Calu3 (cell line): ENCODE measurements at regions of chr7 and their contacts with region 1.

Region 1: DNA sequence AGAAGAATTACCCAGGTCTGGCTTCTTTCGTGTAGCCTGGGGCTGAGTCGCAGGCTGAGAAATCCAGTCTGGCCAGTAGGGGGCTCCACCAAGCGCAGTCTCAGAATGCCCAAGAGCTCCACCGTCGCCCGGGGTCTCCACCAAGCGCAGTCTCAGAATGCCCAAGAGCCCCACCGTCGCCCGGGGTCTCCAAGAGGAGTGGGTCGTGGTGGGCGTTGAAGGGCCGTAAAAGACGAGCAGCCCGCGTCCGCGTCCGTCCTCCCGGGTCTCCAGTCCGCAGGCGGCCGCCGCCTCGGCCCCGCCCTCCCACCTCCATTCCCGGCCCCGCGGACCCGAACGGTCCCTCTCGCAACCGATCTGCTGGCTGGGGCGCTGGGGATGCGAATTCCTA is 895 bp upstream of the ZYX start:
- DNase-seq: peak; percentile 87
- H3K4me3 Mint-ChIP-seq: peak overlapping the region; percentile 85
- H3K27ac Mint-ChIP-seq: peak overlapping the region; percentile 98
- H3K4me1 Mint-ChIP-seq: peaks cover 25% of the 10 kb centered on the region
- H3K27me3 Mint-ChIP-seq: no peaks in the 10 kb centered on the region
- CTCF ChIP-seq: peak; percentile 88

Region 2: DNA sequence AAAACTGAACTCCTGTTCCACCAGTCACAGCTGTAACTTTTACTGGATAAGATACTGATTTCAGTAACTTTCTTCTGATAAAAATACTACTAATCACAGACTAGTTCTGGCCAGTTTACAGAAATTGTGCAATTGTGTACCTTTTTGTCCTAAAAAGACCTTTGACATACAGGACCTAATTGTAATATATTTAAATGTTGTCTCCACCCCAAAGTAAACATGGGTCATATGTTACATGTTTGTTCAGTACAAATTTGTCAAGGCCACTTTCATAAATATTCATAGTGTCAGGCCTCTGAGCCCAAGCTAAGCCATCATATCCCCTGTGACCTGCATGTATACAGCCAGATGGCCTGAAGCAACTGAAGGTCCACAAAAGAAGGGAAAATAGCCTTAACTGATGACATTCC is 275.4 kb before region 1 on chr7:
- CTCF ChIA-PET with region 1: no interaction called
- intact Hi-C with region 1: no loop called
- DNase-seq: no peak
- H3K4me3 Mint-ChIP-seq: no peak overlapping the region
- H3K27ac Mint-ChIP-seq: no peak overlapping the region
- H3K4me1 Mint-ChIP-seq: no peaks in the 10 kb centered on the region
- H3K27me3 Mint-ChIP-seq: no peaks in the 10 kb centered on the region
- CTCF ChIP-seq: no peak

Region 3: DNA sequence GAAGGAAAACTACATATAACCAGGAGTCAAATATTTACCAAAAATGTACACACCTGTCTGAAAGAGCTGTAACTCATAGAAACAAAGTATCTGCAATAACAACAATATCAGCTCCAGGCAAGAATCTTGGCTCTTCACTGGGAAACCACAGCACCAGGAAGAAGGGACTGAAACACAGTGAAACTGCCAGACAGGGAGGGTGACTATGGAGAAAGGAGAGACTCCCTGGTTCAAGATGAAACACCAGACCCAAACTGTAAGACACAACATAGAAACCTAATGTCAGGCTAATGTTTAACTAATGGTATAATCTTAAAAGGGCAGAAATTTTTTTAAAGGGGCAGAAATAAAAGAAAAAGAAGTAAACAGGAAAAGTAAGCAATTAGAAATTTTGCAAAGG is 208.6 kb before region 1 on chr7:
- CTCF ChIA-PET with region 1: no interaction called
- intact Hi-C with region 1: no loop called
- DNase-seq: peak; percentile 60
- H3K4me3 Mint-ChIP-seq: peak overlapping the region; percentile 47
- H3K27ac Mint-ChIP-seq: peak overlapping the region; percentile 45
- H3K4me1 Mint-ChIP-seq: peaks cover 23% of the 10 kb centered on the region
- H3K27me3 Mint-ChIP-seq: no peaks in the 10 kb centered on the region
- CTCF ChIP-seq: no peak

Region 4: GRCh38 chr7:143331179-143331820 is 49.0 kb before region 1 on chr7:
- CTCF ChIA-PET with region 1: interaction called, 6 read pairs
- intact Hi-C with region 1: loop called (anchors 2 kb)
- DNase-seq: peak; percentile 59
- H3K4me3 Mint-ChIP-seq: no peak overlapping the region
- H3K27ac Mint-ChIP-seq: peak overlapping the region; percentile 6
- H3K4me1 Mint-ChIP-seq: peaks cover 45% of the 10 kb centered on the region
- H3K27me3 Mint-ChIP-seq: no peaks in the 10 kb centered on the region
- CTCF ChIP-seq: no peak

Region 5: DNA sequence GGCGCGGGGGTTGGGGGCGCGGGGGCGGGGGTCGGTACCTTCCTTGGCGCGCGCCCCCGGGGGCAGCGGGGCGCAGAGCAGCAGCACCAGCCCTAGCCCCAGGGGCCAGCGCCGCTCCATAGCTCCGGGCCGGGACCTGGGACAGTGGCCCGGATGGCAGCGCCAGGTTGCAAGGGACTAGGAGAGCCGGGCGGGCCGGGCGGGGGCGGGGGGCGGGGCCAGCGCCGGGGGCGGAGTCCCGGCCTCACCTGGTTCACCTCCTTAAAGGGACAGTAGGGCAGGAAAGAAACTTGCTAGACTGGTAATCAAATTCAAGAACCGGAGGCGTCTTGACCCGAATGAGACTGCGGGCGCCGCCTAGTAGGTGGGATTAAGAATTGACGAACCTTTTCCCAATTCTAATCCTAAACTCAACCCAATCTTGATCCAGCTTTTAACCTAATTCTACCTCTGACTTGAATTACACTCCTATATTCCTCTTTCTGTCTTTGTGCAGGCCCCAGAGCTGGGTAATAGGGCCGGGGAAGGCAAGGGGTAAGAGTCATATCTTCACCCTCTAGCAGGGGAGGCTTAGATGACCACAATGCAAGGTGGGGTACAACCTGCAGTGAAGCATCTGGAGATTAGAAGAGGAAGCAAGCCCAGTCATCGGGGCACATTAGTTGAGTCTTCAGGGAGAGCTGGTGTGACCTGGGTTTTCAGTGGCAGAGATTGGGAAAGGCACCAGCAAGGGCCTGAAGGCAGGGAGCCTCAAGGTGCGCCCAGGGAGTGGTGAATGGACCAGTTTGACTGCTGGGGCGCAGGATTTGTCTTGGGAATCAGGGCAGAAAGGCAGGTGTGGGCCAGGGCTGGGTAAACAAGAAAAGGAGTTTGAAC is 28.7 kb after region 1 on chr7 and contains the start of gene EPHA1:
- CTCF ChIA-PET with region 1: interaction called, 12 read pairs
- intact Hi-C with region 1: no loop called
- DNase-seq: peak; percentile 81
- H3K4me3 Mint-ChIP-seq: peak within 1 kb of the TSS; percentile 88
- H3K27ac Mint-ChIP-seq: peak within 1 kb of the TSS; percentile 81
- H3K4me1 Mint-ChIP-seq: peaks cover 20% of the 10 kb centered on the region
- H3K27me3 Mint-ChIP-seq: no peaks in the 10 kb centered on the region
- CTCF ChIP-seq: peak; percentile 73
- total RNA-seq, gene EPHA1: 21.6 and 23.6 TPM in 2 replicates